Endothelial cell of umbilical vein (primary cell): ENCODE measurements at regions of chr7 and their contacts with region 1.

Region 1: GRCh38 chr7:48299580-48300169 is 128.4 kb downstream of the ABCA13 start:
- DNase-seq: peak; percentile 55
- H3K4me3 ChIP-seq: no peak overlapping the region
- H3K27ac ChIP-seq: no peak overlapping the region
- H3K4me1 ChIP-seq: peaks cover 3% of the 10 kb centered on the region
- H3K27me3 ChIP-seq: no peaks in the 10 kb centered on the region
- CTCF ChIP-seq: peak; percentile 61 to 63
- POLR2A ChIP-seq: no peak

Region 2: GRCh38 chr7:48168159-48168558 is 131.5 kb before region 1 on chr7:
- CTCF ChIA-PET with region 1: interaction called, 14 read pairs
- POLR2A ChIA-PET with region 1: no interaction called
- dilution Hi-C with region 1: no loop called
- intact Hi-C with region 1: loop called (anchors 1 kb)
- DNase-seq: peak; percentile 82
- H3K4me3 ChIP-seq: no peak overlapping the region
- H3K27ac ChIP-seq: no peak overlapping the region
- H3K4me1 ChIP-seq: peaks cover 4% of the 10 kb centered on the region
- H3K27me3 ChIP-seq: no peaks in the 10 kb centered on the region
- CTCF ChIP-seq: peak; percentile 18 to 31
- POLR2A ChIP-seq: no peak

Region 3: DNA sequence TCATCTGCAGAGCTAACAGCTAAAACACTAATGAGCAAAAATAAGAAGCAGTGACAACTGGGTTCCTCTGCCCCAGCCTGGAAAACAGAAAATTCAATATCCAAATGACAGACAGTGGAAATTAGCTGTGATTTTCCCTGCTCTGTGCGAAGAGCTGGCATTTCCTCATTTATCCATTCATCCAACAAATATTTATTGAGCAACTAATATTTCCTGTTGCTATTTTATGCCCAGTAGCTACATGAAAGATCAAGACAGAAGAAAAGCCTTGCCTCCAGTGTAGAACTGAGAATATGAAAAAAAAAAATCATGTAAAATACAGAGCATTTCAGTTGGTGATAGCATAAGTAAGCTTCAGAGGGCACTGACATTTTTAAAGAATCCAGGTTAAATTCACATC is 12.5 kb after region 1 on chr7:
- CTCF ChIA-PET with region 1: interaction called, 18 read pairs
- POLR2A ChIA-PET with region 1: no interaction called
- dilution Hi-C with region 1: no loop called
- intact Hi-C with region 1: no loop called
- DNase-seq: no peak
- H3K4me3 ChIP-seq: no peak overlapping the region
- H3K27ac ChIP-seq: no peak overlapping the region
- H3K4me1 ChIP-seq: no peaks in the 10 kb centered on the region
- H3K27me3 ChIP-seq: no peaks in the 10 kb centered on the region
- CTCF ChIP-seq: no peak
- POLR2A ChIP-seq: no peak